ENCODE measurements at regions of chr2 and their contacts with region 1.

Region 1: GRCh38 chr2:204824778-204825453 is 279.6 kb downstream of the PARD3B start:
- DNase-seq: peak in 1 of 3 donors; percentile 14
- ATAC-seq: no peak
- H3K4me3 ChIP-seq: no peak overlapping the region
- H3K27ac ChIP-seq: no peak overlapping the region
- H3K4me1 ChIP-seq: no peaks in the 10 kb centered on the region
- H3K27me3 ChIP-seq: no peaks in the 10 kb centered on the region

Region 2: DNA sequence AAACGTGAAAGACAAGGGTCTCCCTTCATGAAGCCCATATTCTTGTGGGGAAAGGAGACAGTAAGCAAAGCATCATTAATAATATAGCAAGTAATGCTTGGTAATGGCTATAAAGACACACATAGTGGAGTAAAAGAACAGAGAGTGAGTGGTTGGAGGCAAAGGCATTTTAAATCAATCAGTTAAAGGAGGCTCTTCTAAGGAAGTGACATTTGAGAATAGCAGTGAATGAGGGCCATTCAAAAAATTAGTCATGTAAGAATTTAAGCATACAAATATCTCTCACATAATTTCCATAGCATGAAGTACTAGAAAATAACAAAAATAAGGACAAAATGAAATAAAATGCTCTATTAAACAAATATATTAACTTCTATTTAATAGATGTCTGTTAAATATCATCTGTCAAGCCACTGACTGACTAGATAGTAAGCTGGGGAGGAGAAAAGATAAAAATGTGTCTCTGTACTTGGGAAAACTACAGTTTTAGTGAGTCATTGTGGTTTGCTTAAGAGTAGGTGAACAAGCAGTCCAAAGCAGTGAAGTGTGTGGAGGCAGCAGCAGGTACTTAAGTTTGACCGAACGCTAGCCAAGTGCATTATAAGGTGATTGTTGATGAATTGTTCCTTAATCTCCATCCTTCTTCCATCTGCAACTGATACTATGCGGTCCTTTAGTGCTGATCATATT is 119.5 kb before region 1 on chr2:
- intact Hi-C with region 1: no loop called
- DNase-seq: no peak
- ATAC-seq: no peak
- H3K4me3 ChIP-seq: no peak overlapping the region
- H3K27ac ChIP-seq: no peak overlapping the region
- H3K4me1 ChIP-seq: no peaks in the 10 kb centered on the region
- H3K27me3 ChIP-seq: no peaks in the 10 kb centered on the region

Region 3: DNA sequence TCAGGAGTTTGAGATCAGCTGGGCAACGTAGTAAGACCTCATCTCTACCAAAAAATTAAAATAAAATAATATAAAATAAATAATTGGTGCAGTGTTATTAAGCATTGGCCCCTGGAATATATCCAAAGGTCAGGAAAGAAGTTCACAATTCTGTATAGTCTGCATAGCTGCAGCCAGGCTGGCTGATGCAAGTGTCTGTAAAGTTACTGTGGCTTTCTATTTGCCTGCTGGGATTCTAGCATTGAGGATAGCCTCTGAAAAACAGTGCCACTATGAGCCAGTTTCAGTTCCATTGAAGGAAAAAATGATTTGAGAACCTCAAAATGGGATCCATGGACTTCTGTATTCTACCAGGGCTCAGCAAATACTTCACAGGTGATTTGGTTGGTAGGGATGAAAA is 71.1 kb before region 1 on chr2:
- intact Hi-C with region 1: loop called in 1 of 4 experiments (anchors 10 kb)
- DNase-seq: no peak
- ATAC-seq: no peak
- H3K4me3 ChIP-seq: no peak overlapping the region
- H3K27ac ChIP-seq: no peak overlapping the region
- H3K4me1 ChIP-seq: no peaks in the 10 kb centered on the region
- H3K27me3 ChIP-seq: no peaks in the 10 kb centered on the region

Region 4: GRCh38 chr2:204950671-204951346 is 125.9 kb after region 1 on chr2:
- intact Hi-C with region 1: no loop called
- DNase-seq: no peak
- ATAC-seq: no peak
- H3K4me3 ChIP-seq: no peak overlapping the region
- H3K27ac ChIP-seq: no peak overlapping the region
- H3K4me1 ChIP-seq: no peaks in the 10 kb centered on the region
- H3K27me3 ChIP-seq: no peaks in the 10 kb centered on the region

Region 5: DNA sequence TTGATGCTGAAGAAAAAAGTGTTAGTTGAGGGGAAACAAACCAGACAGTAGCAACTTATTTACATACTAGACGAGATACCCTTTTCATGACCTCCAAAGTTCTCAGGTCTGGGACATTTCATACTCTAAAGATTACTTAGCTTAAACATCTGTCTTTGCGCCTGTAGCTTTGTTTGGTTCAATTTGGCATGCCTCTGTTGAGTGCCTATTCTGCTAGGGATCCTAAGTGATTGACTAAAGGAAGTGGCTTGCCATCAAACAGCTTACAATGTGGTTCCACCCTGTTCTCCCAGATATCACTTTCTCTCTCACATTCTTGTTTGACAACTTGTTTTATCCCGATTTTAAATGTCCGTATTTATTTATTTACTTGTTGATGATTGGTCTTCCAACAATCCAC is 209.1 kb after region 1 on chr2:
- intact Hi-C with region 1: no loop called
- DNase-seq: no peak
- ATAC-seq: no peak
- H3K4me3 ChIP-seq: no peak overlapping the region
- H3K27ac ChIP-seq: no peak overlapping the region
- H3K4me1 ChIP-seq: no peaks in the 10 kb centered on the region
- H3K27me3 ChIP-seq: no peaks in the 10 kb centered on the region

Measured in right cardiac atrium (tissue), 5 donors.